Sigmoid colon (tissue), 7 donors: ENCODE measurements at regions of chr20 and their contacts with region 1.

Region 1: DNA sequence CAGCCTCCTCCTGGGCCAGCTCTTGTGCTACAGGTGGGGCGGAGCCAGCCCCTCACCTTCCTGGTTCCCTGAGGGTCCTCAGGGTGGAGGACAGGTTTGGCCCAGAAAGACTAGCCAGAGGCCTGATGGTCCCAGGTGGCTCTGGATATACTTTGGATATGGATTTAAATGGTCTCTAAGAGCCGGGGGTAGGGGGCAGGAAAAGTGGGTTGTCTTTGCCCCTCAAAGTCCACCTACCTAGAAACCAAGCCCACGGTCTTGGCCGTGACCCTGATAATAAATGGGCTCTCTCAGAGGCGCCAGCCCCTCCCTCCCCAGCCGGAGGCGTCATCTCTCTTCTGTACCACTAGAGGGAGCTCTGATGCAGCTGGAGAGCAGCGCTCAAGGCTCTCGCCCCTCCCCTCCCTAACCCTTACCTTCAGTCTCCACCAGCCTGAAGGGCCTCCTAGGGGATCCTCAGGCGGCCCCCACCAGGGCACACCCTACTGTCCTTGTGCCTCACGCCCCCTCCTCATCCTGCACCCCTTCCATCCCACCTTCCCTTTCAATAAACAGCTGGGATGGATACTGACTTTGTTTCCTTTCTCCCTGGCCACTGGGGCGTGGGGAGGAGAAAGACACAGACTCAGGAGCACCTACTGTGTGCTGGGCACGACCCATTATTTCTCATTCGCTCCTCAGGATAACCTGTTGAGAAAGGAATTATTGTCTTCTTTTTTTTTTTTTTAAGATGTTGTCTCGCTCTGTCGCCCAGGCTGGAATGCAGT is 7.6 kb downstream of the NRSN2 start:
- DNase-seq: peak; percentile 86
- H3K4me3 ChIP-seq: no peak overlapping the region
- H3K27ac ChIP-seq: no peak overlapping the region
- H3K4me1 ChIP-seq: peaks cover 0 to 7% (median 2%) of the 10 kb centered on the region in 4 donors
- H3K27me3 ChIP-seq: no peaks in the 10 kb centered on the region
- CTCF ChIP-seq: peak; percentile 79 to 98 (median 84)
- EP300 ChIP-seq: no peak
- POLR2A ChIP-seq: no peak

Region 2: DNA sequence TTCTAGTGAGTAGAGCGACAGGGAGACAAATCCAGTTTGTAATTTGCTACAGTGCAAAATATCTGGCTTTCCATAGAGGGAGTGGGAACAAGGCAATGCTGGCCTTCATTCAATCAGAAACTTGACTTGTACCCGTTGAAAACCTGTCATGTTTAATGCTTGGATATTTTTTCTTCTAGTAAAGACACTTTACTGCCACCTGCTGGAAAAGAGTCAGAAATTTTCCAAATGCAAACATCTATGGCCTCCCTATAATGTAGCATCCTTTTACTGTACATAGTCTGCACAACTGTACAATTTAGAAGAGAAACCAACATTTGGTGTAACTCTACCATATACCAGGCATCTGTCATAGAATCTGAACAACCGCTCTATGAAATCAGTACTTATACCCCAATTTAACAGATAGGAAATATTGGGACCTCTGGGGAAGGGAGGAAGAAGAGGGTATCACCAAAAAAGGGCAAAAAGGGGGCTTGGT is 124.5 kb after region 1 on chr20:
- intact Hi-C with region 1: loop called (anchors 1 kb)
- DNase-seq: no peak
- H3K4me3 ChIP-seq: no peak overlapping the region
- H3K27ac ChIP-seq: no peak overlapping the region
- H3K4me1 ChIP-seq: no peaks in the 10 kb centered on the region
- H3K27me3 ChIP-seq: no peaks in the 10 kb centered on the region
- CTCF ChIP-seq: peak in 3 of 4 experiments; percentile 40 to 50 (median 47)
- EP300 ChIP-seq: no peak
- POLR2A ChIP-seq: no peak

Region 3: GRCh38 chr20:653110-653589 is 298.7 kb after region 1 on chr20 and contains the start of gene SRXN1:
- intact Hi-C with region 1: loop called (anchors 5 kb)
- DNase-seq: peak; percentile 94
- H3K4me3 ChIP-seq: peak within 1 kb of the TSS; percentile 68 to 86 (median 76)
- H3K27ac ChIP-seq: peak within 1 kb of the TSS; percentile 84 to 90 (median 87)
- H3K4me1 ChIP-seq: peaks cover 0 to 22% (median 19%) of the 10 kb centered on the region in 4 donors
- H3K27me3 ChIP-seq: no peaks in the 10 kb centered on the region
- CTCF ChIP-seq: peak in 1 of 4 experiments; percentile 30
- EP300 ChIP-seq: no peak
- POLR2A ChIP-seq: no peak
- total RNA-seq, gene SRXN1: 16.8 to 32.4 (median 27.1) TPM

Region 4: GRCh38 chr20:733861-734260 is 379.4 kb after region 1 on chr20:
- intact Hi-C with region 1: loop called (anchors 10 kb)
- DNase-seq: no peak
- H3K4me3 ChIP-seq: no peak overlapping the region
- H3K27ac ChIP-seq: no peak overlapping the region
- H3K4me1 ChIP-seq: peaks cover 0 to under 1% (median 0%) of the 10 kb centered on the region in 4 donors
- H3K27me3 ChIP-seq: peaks cover 0 to 16% (median 13%) of the 10 kb centered on the region in 3 donors
- CTCF ChIP-seq: no peak
- EP300 ChIP-seq: no peak
- POLR2A ChIP-seq: no peak

Region 5: DNA sequence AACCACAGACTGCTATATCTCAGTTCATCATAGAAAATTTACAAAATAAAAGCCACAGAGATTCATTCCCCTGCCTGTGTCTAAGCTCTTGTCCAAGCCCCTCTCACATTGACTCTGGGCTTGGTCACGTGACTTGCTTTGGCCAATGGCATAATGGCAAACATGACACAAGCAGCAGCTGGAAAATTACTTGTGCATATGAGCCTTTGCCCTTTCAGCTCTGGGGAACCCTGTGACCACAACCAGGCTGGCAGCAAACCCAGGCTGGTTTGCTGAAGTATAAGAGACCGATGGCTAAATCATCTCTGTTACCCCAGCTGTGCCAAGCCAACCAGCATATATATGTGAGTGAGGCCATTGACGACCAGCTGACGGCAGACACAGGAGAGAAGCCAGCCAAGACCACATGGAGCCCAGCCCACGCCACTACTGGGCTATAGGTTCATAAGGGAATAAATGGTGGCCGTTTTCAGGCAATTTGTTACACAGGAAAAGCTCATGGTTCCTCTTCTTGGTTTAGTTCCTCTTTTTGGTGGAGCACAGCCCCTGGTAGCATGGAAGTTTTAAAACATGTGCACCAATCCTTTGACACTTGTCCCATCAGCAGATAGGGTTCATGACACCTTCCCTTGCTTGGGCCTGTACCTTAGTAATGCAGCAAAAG is 679.4 kb after region 1 on chr20:
- intact Hi-C with region 1: no loop called
- DNase-seq: no peak
- H3K4me3 ChIP-seq: no peak overlapping the region
- H3K27ac ChIP-seq: no peak overlapping the region
- H3K4me1 ChIP-seq: no peaks in the 10 kb centered on the region
- H3K27me3 ChIP-seq: no peaks in the 10 kb centered on the region
- CTCF ChIP-seq: no peak
- EP300 ChIP-seq: no peak
- POLR2A ChIP-seq: no peak